ENCODE measurements at regions of chr13 and their contacts with region 1.

Region 1: DNA sequence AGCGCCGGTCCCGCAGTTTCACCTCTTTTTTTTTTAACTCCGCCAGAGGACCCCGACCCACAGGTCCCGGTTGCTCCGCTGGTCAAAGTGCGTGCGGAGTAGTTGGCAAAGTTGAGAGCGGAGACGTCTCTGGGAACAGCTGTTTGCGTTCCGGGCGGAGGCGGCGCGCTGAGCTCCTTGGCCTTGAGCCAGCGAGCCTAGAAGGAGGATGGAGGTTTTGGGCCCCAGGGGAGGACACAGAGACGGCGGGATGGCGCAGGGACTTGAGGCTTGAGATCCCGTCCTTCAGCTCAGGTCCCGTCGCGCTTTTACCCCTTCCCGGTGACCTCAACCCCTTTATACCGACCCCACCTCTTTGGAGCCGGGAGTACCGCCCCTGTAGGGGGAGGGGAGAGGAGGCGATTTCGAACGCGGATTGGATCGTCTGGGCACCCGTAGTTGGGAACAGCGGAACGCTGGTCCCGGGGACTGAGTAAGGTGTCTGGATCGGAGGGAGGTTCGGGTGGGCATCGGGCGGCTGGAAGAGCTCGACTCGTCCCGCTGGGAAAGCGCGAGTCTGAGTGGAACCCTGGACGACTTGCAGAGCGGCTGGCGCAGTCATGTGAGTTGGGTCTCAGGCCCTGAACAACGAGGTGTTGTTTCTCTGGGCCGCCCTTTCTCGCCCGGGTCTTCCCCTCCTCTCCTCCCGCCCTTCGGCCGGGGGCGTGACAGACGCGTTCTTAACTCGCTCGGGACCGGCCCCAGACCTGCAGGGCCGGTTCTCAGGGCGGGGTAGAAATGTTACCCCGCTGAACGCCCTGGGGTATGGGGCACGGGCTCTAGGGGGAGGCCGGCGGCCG is at the start of gene WBP4:
- DNase-seq: peak; percentile 85
- H3K4me3 Mint-ChIP-seq: peak within 1 kb of the TSS; percentile 95
- H3K27ac Mint-ChIP-seq: peak within 1 kb of the TSS; percentile 100
- H3K4me1 Mint-ChIP-seq: peaks cover 43% of the 10 kb centered on the region
- H3K27me3 Mint-ChIP-seq: no peaks in the 10 kb centered on the region
- total RNA-seq, gene WBP4: 13.3 and 13.8 TPM in 2 replicates

Region 2: DNA sequence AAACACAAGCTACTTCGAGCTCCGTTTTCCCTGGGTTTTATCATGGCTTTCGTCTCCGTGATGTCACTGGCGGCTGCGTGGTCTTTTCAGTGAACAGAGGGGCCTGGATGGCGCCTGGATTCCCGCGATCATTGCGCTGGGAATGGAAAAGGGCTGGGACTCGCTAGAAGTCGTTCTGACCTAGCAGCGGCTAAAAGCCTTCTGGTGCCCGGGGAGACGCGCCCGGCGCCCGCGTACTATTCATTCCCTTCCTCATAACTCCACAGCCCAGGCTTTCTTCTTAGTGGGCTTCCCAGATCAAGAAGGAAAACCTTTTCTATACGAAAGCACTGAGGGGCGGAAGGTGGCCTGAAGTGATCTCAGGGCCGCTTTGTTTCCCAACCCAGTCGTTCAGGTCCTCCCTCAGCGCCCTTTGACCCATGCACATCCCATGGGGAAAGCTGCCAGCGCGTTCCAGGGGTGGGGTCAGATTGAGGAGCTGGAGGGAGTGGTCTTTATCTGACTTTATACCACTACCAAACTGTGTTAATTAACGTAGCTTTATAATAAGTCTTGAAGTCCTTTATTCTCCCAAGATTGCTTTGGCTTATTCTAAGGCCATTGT is 138.8 kb before region 1 on chr13:
- intact Hi-C with region 1: loop called (anchors 2 kb)
- DNase-seq: no peak
- H3K4me3 Mint-ChIP-seq: peak overlapping the region; percentile 70
- H3K27ac Mint-ChIP-seq: peak overlapping the region; percentile 68
- H3K4me1 Mint-ChIP-seq: peaks cover 9% of the 10 kb centered on the region
- H3K27me3 Mint-ChIP-seq: no peaks in the 10 kb centered on the region

Region 3: DNA sequence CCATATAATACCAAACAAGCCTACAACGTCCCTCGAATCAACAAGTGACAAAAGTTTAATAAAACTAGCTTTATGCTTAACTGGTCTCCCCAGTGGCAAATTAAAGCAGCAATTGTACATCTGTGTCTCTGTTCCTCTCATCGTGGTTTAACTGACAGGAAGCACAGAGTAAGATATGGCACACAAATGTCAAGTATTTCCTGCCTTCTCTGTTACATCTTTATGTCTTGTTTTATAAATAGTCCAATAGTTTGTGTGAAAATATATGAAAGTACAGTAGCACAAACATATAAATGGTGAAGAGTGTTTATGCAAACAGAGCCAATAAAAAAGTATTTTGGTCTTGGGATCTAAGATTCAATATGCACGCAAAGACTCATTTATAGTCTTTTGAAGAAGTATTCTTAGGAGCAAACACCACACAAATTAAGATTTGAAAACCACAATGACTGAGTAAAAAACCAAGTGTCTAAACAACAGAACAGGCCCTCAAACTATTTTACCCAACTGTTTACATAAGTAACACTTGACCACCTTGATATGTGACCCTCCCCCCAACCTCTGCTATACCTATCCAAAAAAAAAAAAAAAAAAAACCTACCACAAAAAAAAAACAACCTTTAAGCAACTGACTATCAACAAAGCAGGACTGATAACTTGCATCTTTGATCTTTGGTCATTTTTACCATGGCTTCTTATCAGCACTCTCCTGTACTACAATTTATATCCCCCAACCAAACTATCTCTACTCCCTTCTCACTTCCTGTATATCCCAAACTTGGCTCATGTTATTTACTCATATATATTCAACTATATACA is 56.2 kb before region 1 on chr13:
- intact Hi-C with region 1: loop called (anchors 2 kb)
- DNase-seq: no peak
- H3K4me3 Mint-ChIP-seq: peak overlapping the region; percentile 64
- H3K27ac Mint-ChIP-seq: peak overlapping the region; percentile 96
- H3K4me1 Mint-ChIP-seq: peaks cover 63% of the 10 kb centered on the region
- H3K27me3 Mint-ChIP-seq: no peaks in the 10 kb centered on the region

Region 4: DNA sequence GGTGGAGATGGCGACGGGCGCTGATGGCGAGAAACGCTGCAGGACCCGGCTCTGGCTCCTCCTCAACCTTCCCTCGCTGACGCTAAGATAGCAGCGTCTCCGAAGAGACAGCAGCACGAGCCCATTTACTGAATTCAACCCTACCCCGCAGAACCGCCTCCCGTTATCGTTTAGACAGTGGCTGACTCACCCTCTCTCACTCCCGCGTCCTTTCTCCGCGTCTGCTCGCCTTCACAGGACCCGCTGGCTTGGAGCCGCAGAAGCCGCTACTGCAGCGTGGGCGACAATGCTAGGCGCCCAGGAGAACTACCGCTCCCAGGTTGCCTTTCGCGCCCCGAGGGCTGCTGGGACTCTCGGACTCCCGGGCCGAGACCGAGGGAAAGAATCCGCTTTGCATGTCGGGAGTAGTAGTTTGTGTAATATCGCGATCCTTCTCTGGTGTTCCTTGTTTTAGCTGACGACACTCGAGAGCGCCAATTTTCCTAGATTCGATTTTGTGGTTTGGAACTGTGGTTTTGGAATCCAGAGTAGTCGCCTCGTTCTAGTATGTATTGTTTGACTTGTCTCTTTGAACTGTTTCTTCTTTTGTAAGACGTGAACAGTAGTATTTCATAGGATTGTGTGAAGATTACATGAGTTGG is 71.3 kb after region 1 on chr13 and contains the start of gene KBTBD6:
- intact Hi-C with region 1: loop called (anchors 1 kb)
- DNase-seq: peak; percentile 92
- H3K4me3 Mint-ChIP-seq: peak within 1 kb of the TSS; percentile 93
- H3K27ac Mint-ChIP-seq: peak within 1 kb of the TSS; percentile 92
- H3K4me1 Mint-ChIP-seq: peaks cover 42% of the 10 kb centered on the region
- H3K27me3 Mint-ChIP-seq: no peaks in the 10 kb centered on the region
- total RNA-seq, gene KBTBD6: 5.9 and 6.7 TPM in 2 replicates

Region 5: GRCh38 chr13:41148419-41149283 is 87.4 kb after region 1 on chr13:
- intact Hi-C with region 1: no loop called
- DNase-seq: no peak
- H3K4me3 Mint-ChIP-seq: no peak overlapping the region
- H3K27ac Mint-ChIP-seq: no peak overlapping the region
- H3K4me1 Mint-ChIP-seq: no peaks in the 10 kb centered on the region
- H3K27me3 Mint-ChIP-seq: no peaks in the 10 kb centered on the region

Region 6: DNA sequence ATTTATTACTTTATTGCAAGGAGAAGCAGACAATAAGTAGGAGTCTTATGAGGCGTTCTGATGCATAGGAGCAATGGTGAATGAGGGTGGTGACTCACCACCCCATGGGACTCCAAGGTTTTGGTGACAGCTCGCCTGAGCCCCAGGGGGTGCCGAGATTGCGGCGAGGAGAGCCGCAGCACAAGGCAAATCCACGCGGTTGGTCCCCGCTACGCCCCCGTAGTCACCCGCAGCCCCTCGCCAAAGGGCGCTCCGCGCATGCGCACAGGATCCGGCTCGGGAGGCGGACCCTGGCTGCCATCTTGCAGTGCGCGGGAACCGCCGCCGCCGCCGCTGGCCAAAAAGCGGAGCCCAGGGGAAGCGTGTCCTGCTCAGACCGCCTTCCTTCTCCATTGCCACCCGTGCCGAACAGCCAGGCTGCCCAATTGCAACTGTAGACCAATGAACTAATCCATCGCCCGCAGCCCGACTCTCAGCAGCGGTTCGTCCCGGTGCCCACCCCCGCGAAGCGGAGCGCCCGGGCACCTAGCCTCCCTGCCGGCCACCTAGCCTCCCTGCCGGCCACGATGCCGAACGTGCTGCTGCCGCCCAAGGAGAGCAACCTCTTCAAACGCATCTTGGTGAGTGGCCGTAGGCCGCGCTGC is 249.8 kb after region 1 on chr13 and contains the start of gene NAA16:
- intact Hi-C with region 1: loop called (anchors 2 kb)
- DNase-seq: peak; percentile 91
- H3K4me3 Mint-ChIP-seq: peak within 1 kb of the TSS; percentile 94
- H3K27ac Mint-ChIP-seq: peak within 1 kb of the TSS; percentile 89
- H3K4me1 Mint-ChIP-seq: peaks cover 29% of the 10 kb centered on the region
- H3K27me3 Mint-ChIP-seq: no peaks in the 10 kb centered on the region
- total RNA-seq, gene NAA16: 27.9 and 28.5 TPM in 2 replicates

Measured in activated T-helper 2 cell treated with anti-CD3 and anti-CD28 coated beads, Interferon-gamma antibody, Interleukin-2, Interleukin-4, amounts not matched to agents 10 μg/mL and 5 μg/mL and 100 μg/mL, durations not matched to agents 14 hours and 24 hours and 36 hours (primary cell).